MCF 10A (cell line): ENCODE measurements at regions of chr9 and their contacts with region 1.

Region 1: GRCh38 chr9:130682490-130683121 is 11.0 kb upstream of the EXOSC2 start:
- DNase-seq: peak; percentile 87
- H3K4me3 Mint-ChIP-seq: peak overlapping the region; percentile 81
- H3K27ac Mint-ChIP-seq: peak overlapping the region; percentile 33
- H3K4me1 Mint-ChIP-seq: peaks cover 6% of the 10 kb centered on the region
- H3K27me3 Mint-ChIP-seq: no peaks in the 10 kb centered on the region
- CTCF ChIP-seq: peak; percentile 88

Region 2: DNA sequence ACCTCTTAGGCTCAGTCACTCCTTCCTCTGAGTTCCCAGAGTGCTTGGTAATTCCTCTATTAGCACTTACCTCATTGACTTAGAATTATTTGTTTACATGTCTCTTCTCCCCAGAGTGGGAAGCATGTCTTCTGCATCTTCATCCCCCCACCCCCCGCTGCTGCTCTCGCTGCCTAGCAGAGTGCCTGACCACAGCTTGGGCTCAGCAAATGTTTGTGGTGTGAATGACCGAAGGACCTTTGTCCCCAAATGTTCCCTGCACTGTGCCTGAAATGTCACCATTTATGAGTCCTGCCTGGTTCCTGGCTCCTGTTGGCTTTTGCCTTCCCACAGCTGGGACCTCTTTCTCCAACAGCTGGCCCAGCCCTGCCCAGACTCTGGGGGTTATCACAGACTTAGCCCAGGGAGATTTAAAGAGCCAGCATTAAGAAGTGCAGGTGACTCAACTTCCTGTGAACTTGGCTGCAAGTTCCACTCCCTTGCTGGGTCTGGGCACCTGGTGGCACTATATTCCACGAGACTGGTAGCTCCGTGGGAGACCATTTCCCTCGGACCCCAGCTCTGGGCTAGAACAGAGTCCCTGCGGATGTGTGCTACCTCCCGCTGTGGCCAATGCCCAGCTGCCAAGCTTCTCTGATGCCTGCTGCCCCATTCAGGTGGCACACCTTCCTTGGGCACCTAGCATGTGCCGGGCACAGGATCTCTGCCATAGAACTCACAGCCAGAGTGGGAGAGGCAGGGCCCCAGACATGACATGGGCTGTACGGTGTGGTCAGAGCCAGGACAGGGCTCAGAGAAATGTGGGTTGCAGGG is 418.8 kb before region 1 on chr9:
- CTCF ChIA-PET with region 1: interaction called, 4 read pairs
- POLR2A ChIA-PET with region 1: no interaction called
- intact Hi-C with region 1: loop called (anchors 1 kb)
- DNase-seq: peak; percentile 36
- H3K4me3 Mint-ChIP-seq: no peak overlapping the region
- H3K27ac Mint-ChIP-seq: no peak overlapping the region
- H3K4me1 Mint-ChIP-seq: no peaks in the 10 kb centered on the region
- H3K27me3 Mint-ChIP-seq: peaks cover 95% of the 10 kb centered on the region
- CTCF ChIP-seq: peak; percentile 6

Region 3: GRCh38 chr9:130461218-130461630 is 221.4 kb before region 1 on chr9:
- CTCF ChIA-PET with region 1: interaction called, 80 read pairs
- POLR2A ChIA-PET with region 1: interaction called, 5 read pairs
- intact Hi-C with region 1: loop called (anchors 1 kb)
- DNase-seq: peak; percentile 57
- H3K4me3 Mint-ChIP-seq: no peak overlapping the region
- H3K27ac Mint-ChIP-seq: no peak overlapping the region
- H3K4me1 Mint-ChIP-seq: no peaks in the 10 kb centered on the region
- H3K27me3 Mint-ChIP-seq: no peaks in the 10 kb centered on the region
- CTCF ChIP-seq: peak; percentile 88

Region 4: GRCh38 chr9:130693426-130694191 is 11.0 kb after region 1 on chr9 and contains the start of gene EXOSC2:
- CTCF ChIA-PET with region 1: interaction called, 8 read pairs
- POLR2A ChIA-PET with region 1: interaction called, 10 read pairs
- intact Hi-C with region 1: no loop called
- DNase-seq: peak; percentile 98
- H3K4me3 Mint-ChIP-seq: peak within 1 kb of the TSS; percentile 91
- H3K27ac Mint-ChIP-seq: peak within 1 kb of the TSS; percentile 89
- H3K4me1 Mint-ChIP-seq: peaks cover 41% of the 10 kb centered on the region
- H3K27me3 Mint-ChIP-seq: no peaks in the 10 kb centered on the region
- CTCF ChIP-seq: no peak
- total RNA-seq, gene EXOSC2: 42.3 and 57.7 TPM in 2 replicates